A549 (cell line): ENCODE measurements at regions of chr7 and their contacts with region 1.

Region 1: DNA sequence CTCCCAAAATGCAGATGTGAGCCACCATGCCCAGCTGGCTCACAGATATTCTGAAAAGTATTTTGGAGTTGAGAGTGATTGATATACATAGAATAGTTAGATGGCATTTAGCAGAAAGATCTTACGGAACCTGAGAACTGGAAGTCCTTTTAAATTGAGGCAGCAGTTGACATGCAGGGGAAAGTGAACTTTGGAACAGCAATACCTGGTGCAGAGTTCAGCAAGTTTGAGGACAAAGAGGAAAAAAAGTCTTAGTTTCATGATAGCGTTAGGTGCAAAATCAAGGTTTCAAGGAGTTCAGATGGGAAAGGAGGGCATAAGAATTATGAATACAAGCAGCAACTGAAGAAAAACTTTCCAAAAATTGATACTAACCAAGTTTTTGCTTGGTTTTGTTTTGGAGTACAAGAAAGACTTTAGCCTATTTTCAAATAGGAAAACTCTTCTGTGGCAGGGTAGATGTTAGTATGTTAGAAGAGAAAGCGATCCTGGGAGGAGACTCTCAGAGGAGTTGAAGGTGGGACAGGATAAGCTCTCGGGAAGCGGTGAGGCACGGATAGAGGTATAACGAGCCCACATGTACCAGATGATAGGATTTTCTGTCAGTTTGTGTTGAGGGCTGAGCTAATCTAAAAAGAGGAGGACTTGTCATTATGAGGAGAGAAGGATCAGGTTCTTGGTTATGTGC is 28.0 kb upstream of the STMP1 start:
- DNase-seq: no peak
- ATAC-seq: no peak
- H3K4me3 ChIP-seq: no peak overlapping the region
- H3K27ac ChIP-seq: no peak overlapping the region
- H3K4me1 ChIP-seq: no peaks in the 10 kb centered on the region
- CTCF ChIP-seq: no peak
- EP300 ChIP-seq: no peak
- POLR2A ChIP-seq: no peak
- RAD21 ChIP-seq: no peak

Region 2: DNA sequence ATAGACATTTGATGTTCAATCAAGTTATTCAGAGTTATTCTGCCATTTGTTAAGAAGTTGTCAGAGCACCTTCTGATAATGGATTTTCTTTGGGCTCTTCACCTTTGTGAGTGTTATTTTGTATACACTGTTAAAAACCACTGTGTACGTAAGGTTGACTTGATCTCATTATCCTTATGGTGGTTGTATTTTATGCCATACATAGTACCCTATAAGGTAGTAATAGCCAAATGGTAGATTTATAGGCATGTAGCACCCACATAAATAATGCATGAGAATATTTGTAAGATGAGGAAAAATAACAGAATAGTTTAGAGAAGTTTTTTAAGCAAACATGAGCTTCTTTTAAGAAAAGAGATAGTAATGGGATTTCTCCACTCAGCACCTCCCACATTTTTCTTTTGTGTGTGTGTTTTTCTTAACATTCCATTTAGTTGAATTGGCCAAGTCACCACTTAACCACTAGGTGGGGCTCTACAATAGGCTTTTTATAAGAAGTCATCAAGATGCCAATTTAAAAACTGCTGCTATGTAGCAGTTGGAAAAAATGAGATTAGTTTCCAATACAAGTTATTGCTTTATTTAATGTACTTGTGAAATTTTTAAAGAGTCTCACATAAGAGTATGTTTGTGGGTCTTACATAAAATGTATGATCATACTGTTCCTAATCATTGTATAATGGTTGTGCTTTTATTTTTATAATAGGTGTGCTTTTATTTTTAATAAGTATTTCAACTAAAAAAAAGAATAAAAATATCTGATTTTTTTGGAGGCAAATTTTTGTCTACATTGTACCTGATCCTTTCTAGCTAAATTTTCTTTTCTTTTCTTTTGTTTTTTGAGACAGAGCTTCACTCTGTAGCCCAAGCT is 13.1 kb before region 1 on chr7:
- CTCF ChIA-PET with region 1: interaction called, 10 read pairs
- POLR2A ChIA-PET with region 1: no interaction called
- DNase-seq: peak; percentile 40 to 75
- ATAC-seq: peak; percentile 70 to 80; a peak in 5 of 6 replicates
- H3K4me3 ChIP-seq: no peak overlapping the region
- H3K27ac ChIP-seq: no peak overlapping the region
- H3K4me1 ChIP-seq: no peaks in the 10 kb centered on the region
- CTCF ChIP-seq: peak; percentile 82
- EP300 ChIP-seq: no peak
- POLR2A ChIP-seq: no peak
- RAD21 ChIP-seq: peak; percentile 32 to 37; a peak in 3 of 5 replicates

Region 3: DNA sequence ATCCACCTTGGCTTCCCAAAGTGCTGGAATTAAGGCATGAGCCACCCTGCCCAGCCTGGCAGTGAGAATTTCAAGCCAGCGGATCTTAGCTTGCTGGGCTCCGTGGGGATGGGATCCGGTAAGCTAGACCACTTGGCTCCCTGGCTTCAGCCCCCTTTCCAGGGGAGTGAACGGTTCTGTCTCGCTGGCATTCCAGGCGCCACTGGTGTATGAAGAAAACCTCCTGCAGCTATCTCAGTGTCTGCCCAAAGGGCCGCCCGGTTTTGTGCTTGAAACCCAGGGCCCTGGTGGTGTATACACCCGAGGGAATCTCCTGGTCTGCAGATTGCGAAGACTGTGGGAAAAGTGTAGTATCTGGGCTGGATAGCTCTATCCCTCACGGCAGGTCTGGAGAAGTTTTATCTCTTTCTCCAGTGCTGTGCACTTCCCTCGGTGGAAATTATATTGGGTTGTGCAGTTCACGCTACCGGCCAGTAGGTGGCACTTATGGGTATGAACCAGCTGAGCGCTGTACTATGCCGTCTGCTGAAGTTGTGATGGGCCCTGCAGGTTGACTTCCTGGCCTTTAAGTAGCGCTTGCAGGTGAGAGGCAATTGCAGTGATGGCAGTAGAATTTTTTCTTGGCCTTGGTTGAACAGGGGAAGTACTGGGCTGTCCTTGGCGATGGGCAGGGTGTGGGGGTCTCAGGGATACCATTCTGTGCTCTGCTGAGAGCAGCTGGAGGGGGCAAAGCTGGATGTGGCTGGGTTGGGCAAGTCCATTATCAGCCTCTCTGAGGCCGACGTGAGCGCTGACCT is 480.8 kb after region 1 on chr7:
- CTCF ChIA-PET with region 1: no interaction called
- POLR2A ChIA-PET with region 1: no interaction called
- DNase-seq: peak; percentile 48 to 61
- ATAC-seq: peak; percentile 85 to 99
- H3K4me3 ChIP-seq: no peak overlapping the region
- H3K27ac ChIP-seq: no peak overlapping the region
- H3K4me1 ChIP-seq: no peaks in the 10 kb centered on the region
- CTCF ChIP-seq: peak; percentile 50
- EP300 ChIP-seq: no peak
- POLR2A ChIP-seq: no peak
- RAD21 ChIP-seq: peak; percentile 34 to 52; a peak in 3 of 5 replicates

Region 4: DNA sequence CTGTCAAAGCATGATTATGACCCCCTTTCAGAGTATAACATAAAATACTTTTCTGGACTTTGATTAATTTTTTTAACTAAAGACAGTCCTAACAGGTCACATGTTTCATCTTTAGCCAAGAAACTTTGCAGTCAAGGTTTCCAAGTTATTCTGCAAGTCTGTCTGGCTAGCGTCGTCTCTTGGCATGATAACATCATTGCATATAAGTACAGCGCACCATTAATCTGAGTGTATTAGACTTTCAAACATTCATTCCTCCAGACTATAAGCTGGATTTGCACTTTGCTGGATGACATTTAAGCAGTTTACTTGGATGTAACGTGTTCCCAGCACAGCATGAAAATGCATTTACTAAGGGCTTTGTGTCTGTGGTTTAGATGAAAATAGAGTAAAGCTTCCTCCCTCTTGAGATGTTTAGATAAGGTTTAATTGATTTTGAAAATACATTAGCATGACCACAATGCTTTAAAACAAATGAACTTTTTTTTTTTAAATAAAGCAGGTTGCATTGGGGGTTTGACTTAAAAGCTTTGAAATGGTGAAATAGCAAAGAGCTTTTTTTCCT is 691.8 kb after region 1 on chr7:
- CTCF ChIA-PET with region 1: no interaction called
- POLR2A ChIA-PET with region 1: no interaction called
- DNase-seq: no peak
- ATAC-seq: no peak
- H3K4me3 ChIP-seq: no peak overlapping the region
- H3K27ac ChIP-seq: no peak overlapping the region
- H3K4me1 ChIP-seq: no peaks in the 10 kb centered on the region
- CTCF ChIP-seq: no peak
- EP300 ChIP-seq: no peak
- POLR2A ChIP-seq: no peak
- RAD21 ChIP-seq: no peak